GM10248 (cell line): ENCODE measurements at regions of chr1 and their contacts with region 1.

Region 1: GRCh38 chr1:154870115-154870571 is at the start of gene KCNN3:
- DNase-seq: peak; percentile 98
- CTCF ChIP-seq: no peak

Region 2: DNA sequence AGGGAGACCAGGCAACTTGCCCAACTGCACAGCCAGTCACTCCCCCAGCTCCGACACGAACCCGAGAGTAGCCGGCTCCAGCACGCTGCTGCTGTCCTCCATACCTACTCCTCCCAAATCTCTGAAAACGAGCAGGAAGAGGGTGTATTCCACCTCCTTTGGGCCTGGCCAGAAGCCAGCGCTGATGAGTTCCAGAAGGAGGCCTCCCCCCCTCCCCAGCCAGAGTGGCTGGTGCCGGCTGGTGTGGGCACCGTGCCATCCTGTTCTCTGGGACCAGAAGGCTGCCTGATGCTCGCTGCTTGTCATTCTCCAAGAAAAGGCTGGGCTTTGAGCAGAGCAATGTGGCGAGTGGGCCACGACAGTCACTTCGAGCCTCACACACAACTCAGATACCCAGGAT is 22.3 kb before region 1 on chr1:
- CTCF ChIA-PET with region 1: interaction called, 12 read pairs
- POLR2A ChIA-PET with region 1: interaction called, 4 read pairs
- DNase-seq: no peak
- CTCF ChIP-seq: no peak

Region 3: DNA sequence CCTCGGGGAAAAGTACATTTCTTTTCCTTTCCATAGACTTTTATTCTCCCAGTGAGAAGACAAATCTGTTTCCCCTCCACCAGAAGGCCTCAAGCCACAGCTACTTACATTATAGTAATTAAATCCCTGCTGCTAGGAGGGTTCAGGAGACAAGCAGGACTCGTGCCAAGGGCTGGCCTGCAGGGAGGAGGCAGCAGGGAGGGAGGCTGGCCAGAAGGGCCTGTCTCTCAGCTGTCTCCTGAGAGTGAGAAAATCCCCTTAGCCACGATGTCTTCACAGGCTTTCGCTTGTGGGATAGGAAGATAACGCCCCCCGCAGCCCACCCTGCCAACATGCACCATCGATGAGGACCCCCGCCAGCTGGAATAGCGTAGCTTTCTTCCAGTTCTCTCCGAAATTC is 14.1 kb before region 1 on chr1:
- CTCF ChIA-PET with region 1: interaction called, 23 read pairs
- POLR2A ChIA-PET with region 1: interaction called, 33 read pairs
- DNase-seq: no peak
- CTCF ChIP-seq: no peak

Region 4: DNA sequence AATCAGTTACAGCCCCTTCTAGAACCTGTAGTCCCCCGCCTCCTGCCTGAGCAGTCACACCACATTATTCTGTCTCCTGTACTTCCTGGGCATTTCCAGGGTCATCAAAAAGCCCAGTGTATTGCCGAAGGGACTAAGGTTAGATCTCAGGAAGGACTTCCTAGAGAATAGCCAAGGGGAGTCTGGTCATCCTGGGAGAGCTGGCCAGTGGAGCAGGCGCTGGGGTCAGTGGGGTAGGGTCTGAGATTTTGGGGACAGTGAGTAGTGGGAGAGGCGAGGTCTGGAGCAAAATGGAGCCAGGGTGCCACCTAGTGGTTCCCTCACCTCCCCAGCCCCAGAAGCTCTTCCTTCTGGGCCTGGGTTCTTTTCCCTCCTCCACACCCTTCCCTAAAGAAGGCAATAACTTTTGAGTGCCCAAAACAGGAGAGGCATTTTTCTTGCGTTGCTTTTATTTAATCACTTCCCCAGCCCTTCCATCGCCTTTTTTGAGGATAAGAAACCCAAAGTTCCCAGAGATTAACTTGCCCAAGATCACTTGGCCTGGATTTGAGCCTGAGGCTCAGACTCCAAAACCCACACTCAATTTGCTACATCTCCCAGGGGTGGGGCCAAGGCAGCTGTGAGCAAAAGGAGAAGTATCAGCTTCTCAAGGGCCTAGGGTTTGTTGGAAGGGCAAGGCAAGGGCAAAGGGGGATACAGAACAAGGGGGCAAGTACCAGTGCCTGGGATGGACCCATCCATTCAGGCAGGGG is 73.7 kb after region 1 on chr1:
- CTCF ChIA-PET with region 1: interaction called, 12 read pairs
- POLR2A ChIA-PET with region 1: interaction called, 3 read pairs
- DNase-seq: peak; percentile 66
- CTCF ChIP-seq: peak; percentile 89